Lower lobe of right lung (tissue), 2 donors: ENCODE measurements at regions of chr4 and their contacts with region 1.

Region 1: GRCh38 chr4:103008875-103009729 is 10.4 kb downstream of the SLC9B1 start:
- DNase-seq: no peak
- ATAC-seq: peak; percentile 82 to 84
- H3K4me3 ChIP-seq: no peak overlapping the region
- H3K27ac ChIP-seq: no peak overlapping the region
- H3K4me1 ChIP-seq: peaks cover 13% of the 10 kb centered on the region
- H3K27me3 ChIP-seq: no peaks in the 10 kb centered on the region
- CTCF ChIP-seq: peak; percentile 76

Region 2: GRCh38 chr4:102493794-102494193 is 515.3 kb before region 1 on chr4:
- intact Hi-C with region 1: no loop called
- DNase-seq: no peak
- ATAC-seq: peak; percentile 73 to 74
- H3K4me3 ChIP-seq: no peak overlapping the region
- H3K27ac ChIP-seq: peak overlapping the region; percentile 18
- H3K4me1 ChIP-seq: peaks cover 8% of the 10 kb centered on the region
- H3K27me3 ChIP-seq: no peaks in the 10 kb centered on the region
- CTCF ChIP-seq: no peak

Region 3: DNA sequence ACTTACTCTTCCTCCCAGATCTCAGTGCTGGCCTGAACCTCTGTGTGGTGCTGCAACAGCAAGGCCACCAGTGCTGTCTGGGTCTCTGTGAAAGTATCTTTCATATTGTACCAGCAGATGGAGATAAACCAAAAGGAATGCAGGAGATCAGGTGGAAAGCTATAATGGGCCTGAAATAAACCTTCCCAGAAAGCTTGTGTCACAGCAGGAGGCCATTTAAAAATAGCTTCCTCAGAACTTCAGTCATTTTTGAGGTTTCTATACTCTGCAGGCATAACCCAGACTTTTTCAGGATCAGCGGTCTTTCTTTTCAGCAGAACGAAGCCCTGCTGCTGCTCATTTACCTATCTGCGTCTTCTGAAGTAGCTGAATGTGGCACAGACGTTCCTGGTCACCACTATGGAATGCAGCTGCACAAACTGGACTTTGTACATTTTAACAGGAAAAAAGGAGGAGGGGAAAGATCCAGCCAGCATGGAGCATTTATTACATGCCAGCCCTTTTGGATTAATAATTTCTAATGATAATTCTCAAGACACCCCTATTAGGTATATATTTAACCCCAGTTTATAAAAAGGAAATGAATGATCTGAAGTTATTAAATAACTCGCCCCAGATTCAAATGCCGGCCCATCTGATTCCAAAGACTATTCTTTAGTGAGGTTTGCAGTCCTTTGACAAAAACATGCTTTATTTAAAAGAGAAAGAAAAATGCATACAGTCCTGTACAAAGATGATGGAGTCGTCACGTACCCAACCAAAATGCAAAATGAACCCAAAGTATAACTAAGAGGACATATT is 388.2 kb before region 1 on chr4:
- intact Hi-C with region 1: loop called (anchors 10 kb)
- DNase-seq: no peak
- ATAC-seq: peak; percentile 83 to 91
- H3K4me3 ChIP-seq: no peak overlapping the region
- H3K27ac ChIP-seq: no peak overlapping the region
- H3K4me1 ChIP-seq: no peaks in the 10 kb centered on the region
- H3K27me3 ChIP-seq: no peaks in the 10 kb centered on the region
- CTCF ChIP-seq: peak; percentile 45

Region 4: GRCh38 chr4:103318327-103318726 is 309.2 kb after region 1 on chr4:
- intact Hi-C with region 1: no loop called
- DNase-seq: no peak
- ATAC-seq: no peak
- H3K4me3 ChIP-seq: no peak overlapping the region
- H3K27ac ChIP-seq: no peak overlapping the region
- H3K4me1 ChIP-seq: no peaks in the 10 kb centered on the region
- H3K27me3 ChIP-seq: no peaks in the 10 kb centered on the region
- CTCF ChIP-seq: no peak